ENCODE measurements at regions of chr16 and their contacts with region 1.

Region 1: GRCh38 chr16:19555162-19555937 is at the start of gene VPS35L:
- DNase-seq: peak; percentile 85 to 96 (median 88)
- ATAC-seq: peak; percentile 98
- H3K4me3 ChIP-seq: peak within 1 kb of the TSS; percentile 67
- H3K27ac ChIP-seq: peak within 1 kb of the TSS; percentile 89
- H3K4me1 ChIP-seq: peaks cover 0 to 8% of the 10 kb centered on the region in 2 experiments; a peak in 3 of 5 replicates
- H3K27me3 ChIP-seq: no peaks in the 10 kb centered on the region
- CTCF ChIP-seq: peak; percentile 75 to 80 (median 76)
- EP300 ChIP-seq: 0 out of 2 replicates have a peak, but pooled peaks have one; percentile 4
- POLR2A ChIP-seq: peak; percentile 80
- RAD21 ChIP-seq: peak in 1 of 2 experiments; percentile 22; a peak in 2 of 4 replicates
- polyA plus RNA-seq, gene VPS35L: 18.3 to 27.1 TPM

Region 2: GRCh38 chr16:19474617-19475016 is 80.7 kb before region 1 on chr16:
- CTCF ChIA-PET with region 1: no interaction called
- POLR2A ChIA-PET with region 1: no interaction called
- in situ Hi-C with region 1: no loop called
- intact Hi-C with region 1: no loop called
- DNase-seq: no peak
- ATAC-seq: peak; percentile 66
- H3K4me3 ChIP-seq: no peak overlapping the region
- H3K27ac ChIP-seq: no peak overlapping the region
- H3K4me1 ChIP-seq: no peaks in the 10 kb centered on the region
- H3K27me3 ChIP-seq: no peaks in the 10 kb centered on the region; a peak in 1 of 5 replicates
- CTCF ChIP-seq: 0 out of 6 replicates have a peak, but pooled peaks of 1 of the 3 experiments have one; percentile 19
- EP300 ChIP-seq: no peak
- POLR2A ChIP-seq: no peak
- RAD21 ChIP-seq: no peak

Region 3: DNA sequence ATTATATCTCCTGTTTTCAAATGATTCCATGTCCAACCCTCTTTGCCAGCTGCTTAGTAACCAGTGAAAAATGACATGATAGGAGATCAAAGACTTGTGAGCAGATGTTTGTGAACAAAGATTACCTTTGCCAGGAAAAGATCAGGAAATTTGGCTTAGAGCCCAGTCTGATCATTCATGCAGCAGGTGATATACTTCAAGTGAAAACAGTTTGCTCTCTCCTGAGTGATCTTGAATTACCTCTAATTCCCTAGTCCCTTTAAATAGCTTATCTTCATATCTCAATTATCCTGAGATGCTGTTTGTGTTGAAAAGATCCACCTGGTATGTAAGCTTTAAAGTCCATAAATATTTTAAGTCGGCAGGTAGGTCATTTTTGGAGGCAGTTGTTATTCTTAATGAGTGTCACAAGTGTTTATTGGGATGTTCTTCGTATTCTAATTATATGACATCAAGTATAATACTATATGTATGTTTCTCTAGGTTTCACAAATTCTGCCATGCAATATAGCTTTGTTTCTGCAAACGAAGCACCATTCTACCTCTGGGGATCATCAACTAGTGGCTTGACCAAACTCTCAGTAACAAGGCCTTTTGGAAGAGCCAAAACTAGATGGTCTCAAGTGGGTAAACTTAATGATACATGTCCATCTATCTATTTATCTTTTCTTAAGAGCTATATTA is 13.1 kb before region 1 on chr16:
- CTCF ChIA-PET with region 1: no interaction called
- POLR2A ChIA-PET with region 1: interaction called, 10 read pairs
- in situ Hi-C with region 1: no loop called
- intact Hi-C with region 1: no loop called
- DNase-seq: no peak
- ATAC-seq: no peak
- H3K4me3 ChIP-seq: no peak overlapping the region
- H3K27ac ChIP-seq: no peak overlapping the region
- H3K4me1 ChIP-seq: no peaks in the 10 kb centered on the region
- H3K27me3 ChIP-seq: no peaks in the 10 kb centered on the region
- CTCF ChIP-seq: no peak
- EP300 ChIP-seq: no peak
- POLR2A ChIP-seq: no peak
- RAD21 ChIP-seq: no peak

Measured in K562 (cell line).